ENCODE measurements at regions of chr17 and their contacts with region 1.

Region 1: DNA sequence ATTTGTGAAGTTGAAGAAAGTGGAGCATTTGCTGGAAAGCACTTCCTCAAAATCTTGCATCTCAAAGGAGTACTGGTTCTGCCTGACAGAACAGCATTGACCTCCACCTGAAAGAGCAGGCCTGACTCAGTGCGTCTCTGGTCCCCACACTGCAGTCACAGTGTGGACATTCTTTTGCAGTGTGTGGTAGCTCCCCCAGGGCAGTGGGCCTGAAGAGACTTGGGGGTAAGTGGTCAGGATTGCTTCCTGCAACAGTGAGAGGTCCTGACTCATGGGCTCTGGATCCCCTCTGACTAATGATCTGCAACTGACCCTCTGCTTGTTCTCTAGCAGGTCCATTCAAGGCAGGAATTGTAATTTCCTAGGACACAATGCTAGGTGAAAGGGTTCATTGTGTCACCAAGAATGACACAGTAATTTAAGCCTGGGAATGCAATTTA is 204.9 kb upstream of the KCNJ16 start:
- DNase-seq: no peak
- ATAC-seq: no peak
- H3K4me3 ChIP-seq: no peak overlapping the region
- H3K4me3 Mint-ChIP-seq: no peak overlapping the region
- H3K27ac ChIP-seq: no peak overlapping the region
- H3K27ac Mint-ChIP-seq: no peak overlapping the region
- H3K4me1 ChIP-seq: no peaks in the 10 kb centered on the region
- H3K4me1 Mint-ChIP-seq: no peaks in the 10 kb centered on the region
- H3K27me3 ChIP-seq: no peaks in the 10 kb centered on the region
- H3K27me3 Mint-ChIP-seq: no peaks in the 10 kb centered on the region

Region 2: DNA sequence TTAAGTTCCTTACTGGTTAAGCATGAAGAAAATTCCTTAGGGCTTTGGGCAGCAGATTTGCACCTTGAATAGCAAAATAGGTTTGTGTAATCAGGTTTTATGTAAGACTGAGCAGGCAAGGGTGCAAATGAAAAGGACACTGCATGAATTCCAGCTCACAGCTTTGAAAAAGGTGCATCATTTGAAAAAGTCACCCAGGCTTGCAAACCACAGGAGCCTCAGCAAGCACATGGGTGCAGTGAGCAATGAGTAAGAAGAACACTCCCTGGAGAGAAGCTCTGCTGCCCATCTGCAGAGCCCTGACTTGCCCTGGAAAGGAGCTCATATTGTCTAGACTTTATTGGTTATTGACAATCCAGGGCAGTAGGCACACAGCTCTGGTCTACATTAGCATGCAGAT is 39.3 kb after region 1 on chr17:
- CTCF ChIA-PET with region 1: no interaction called
- POLR2A ChIA-PET with region 1: interaction called in 1 of 2 experiments, 14 read pairs
- DNase-seq: no peak
- ATAC-seq: no peak
- H3K4me3 ChIP-seq: no peak overlapping the region
- H3K4me3 Mint-ChIP-seq: no peak overlapping the region
- H3K27ac ChIP-seq: no peak overlapping the region
- H3K27ac Mint-ChIP-seq: no peak overlapping the region
- H3K4me1 ChIP-seq: no peaks in the 10 kb centered on the region
- H3K4me1 Mint-ChIP-seq: no peaks in the 10 kb centered on the region
- H3K27me3 ChIP-seq: no peaks in the 10 kb centered on the region
- H3K27me3 Mint-ChIP-seq: peaks cover 3 to 4% of the 10 kb centered on the region in 2 donors

Region 3: DNA sequence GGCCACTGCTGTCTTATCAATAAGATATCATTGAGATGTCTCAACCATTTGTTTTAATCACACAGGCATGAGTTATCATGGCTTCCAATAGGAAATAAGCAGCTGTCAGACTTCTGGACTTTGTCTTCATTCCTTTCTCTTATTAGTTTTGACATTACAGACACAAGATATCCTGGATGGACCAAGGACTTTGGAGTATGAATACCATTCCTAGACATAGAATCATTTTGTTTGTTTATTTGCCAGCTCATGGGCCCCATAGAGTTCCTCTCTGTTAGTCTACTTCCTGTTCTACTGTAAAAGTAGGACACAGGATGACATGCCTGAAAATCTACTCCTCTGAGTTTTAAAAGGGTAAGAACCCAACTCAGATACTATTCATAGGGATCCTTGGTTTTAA is 127.2 kb after region 1 on chr17:
- CTCF ChIA-PET with region 1: no interaction called
- POLR2A ChIA-PET with region 1: no interaction called
- DNase-seq: no peak
- ATAC-seq: no peak
- H3K4me3 ChIP-seq: no peak overlapping the region
- H3K4me3 Mint-ChIP-seq: no peak overlapping the region
- H3K27ac ChIP-seq: no peak overlapping the region
- H3K27ac Mint-ChIP-seq: no peak overlapping the region
- H3K4me1 ChIP-seq: no peaks in the 10 kb centered on the region
- H3K4me1 Mint-ChIP-seq: no peaks in the 10 kb centered on the region
- H3K27me3 ChIP-seq: no peaks in the 10 kb centered on the region
- H3K27me3 Mint-ChIP-seq: no peaks in the 10 kb centered on the region